ENCODE measurements at regions of chr5 and their contacts with region 1.

Region 1: GRCh38 chr5:34895641-34896419 is 19.5 kb downstream of the RAD1 start:
- DNase-seq: no peak
- H3K4me3 ChIP-seq: no peak overlapping the region
- H3K27ac ChIP-seq: no peak overlapping the region
- H3K4me1 ChIP-seq: no peaks in the 10 kb centered on the region
- H3K27me3 ChIP-seq: no peaks in the 10 kb centered on the region
- CTCF ChIP-seq: no peak
- POLR2A ChIP-seq: no peak

Region 2: DNA sequence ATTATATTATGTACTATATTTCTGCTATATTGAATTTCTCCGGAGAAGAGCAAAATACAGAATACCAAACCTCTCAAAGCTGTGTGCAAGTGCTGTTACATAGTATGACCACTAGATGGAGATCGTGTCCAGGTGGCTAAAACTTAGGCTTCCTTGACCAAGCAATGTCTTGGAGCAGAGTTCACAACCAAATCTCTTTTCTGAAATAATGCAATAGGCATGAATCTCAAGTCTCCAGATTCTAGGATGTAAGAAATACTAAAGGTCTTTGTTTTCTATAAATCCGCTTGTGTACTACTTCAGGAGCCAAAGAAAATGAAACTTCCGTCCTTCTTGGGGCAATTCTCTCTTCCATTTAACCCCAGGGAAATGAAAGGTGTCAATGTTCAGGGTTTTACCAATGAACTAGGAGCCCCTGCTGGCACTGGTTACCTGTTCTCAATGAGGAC is 421.2 kb before region 1 on chr5:
- intact Hi-C with region 1: loop called (anchors 5 kb)
- DNase-seq: no peak
- H3K4me3 ChIP-seq: no peak overlapping the region
- H3K27ac ChIP-seq: no peak overlapping the region
- H3K4me1 ChIP-seq: no peaks in the 10 kb centered on the region
- H3K27me3 ChIP-seq: no peaks in the 10 kb centered on the region
- CTCF ChIP-seq: peak; percentile 72 to 83 (median 82)
- POLR2A ChIP-seq: no peak

Region 3: GRCh38 chr5:34486160-34486848 is 409.5 kb before region 1 on chr5:
- intact Hi-C with region 1: loop called (anchors 2 kb)
- DNase-seq: no peak
- H3K4me3 ChIP-seq: no peak overlapping the region
- H3K27ac ChIP-seq: peak overlapping the region; percentile 26
- H3K4me1 ChIP-seq: peaks cover 22% of the 10 kb centered on the region
- H3K27me3 ChIP-seq: no peaks in the 10 kb centered on the region
- CTCF ChIP-seq: peak; percentile 74 to 86 (median 86)
- POLR2A ChIP-seq: no peak

Region 4: DNA sequence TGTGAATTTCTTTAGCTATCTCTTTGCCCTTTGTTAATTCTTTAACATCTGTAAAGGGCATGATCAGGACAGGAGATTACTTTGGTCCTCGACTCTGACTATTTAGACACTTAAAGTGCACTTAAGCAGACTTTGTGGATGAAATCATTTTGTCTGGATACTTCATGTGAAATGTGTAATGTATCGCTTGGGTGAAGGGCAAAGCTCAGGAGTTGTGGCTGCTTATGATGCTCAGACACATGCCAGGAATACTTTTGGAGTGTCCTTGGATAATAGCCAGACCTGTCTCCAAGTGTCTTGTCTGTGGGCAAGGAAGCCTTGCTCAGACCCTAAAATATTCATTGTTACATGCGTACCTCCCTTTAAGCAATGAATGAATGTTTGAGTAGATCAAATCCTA is 152.0 kb before region 1 on chr5:
- intact Hi-C with region 1: no loop called
- DNase-seq: no peak
- H3K4me3 ChIP-seq: no peak overlapping the region
- H3K27ac ChIP-seq: no peak overlapping the region
- H3K4me1 ChIP-seq: peaks cover 32% of the 10 kb centered on the region
- H3K27me3 ChIP-seq: no peaks in the 10 kb centered on the region
- CTCF ChIP-seq: no peak
- POLR2A ChIP-seq: no peak

Region 5: GRCh38 chr5:35073160-35073559 is 177.3 kb after region 1 on chr5:
- intact Hi-C with region 1: no loop called
- DNase-seq: no peak
- H3K4me3 ChIP-seq: no peak overlapping the region
- H3K27ac ChIP-seq: no peak overlapping the region
- H3K4me1 ChIP-seq: no peaks in the 10 kb centered on the region
- H3K27me3 ChIP-seq: no peaks in the 10 kb centered on the region
- CTCF ChIP-seq: no peak
- POLR2A ChIP-seq: no peak